ENCODE measurements at regions of chr22 and their contacts with region 1.

Region 1: DNA sequence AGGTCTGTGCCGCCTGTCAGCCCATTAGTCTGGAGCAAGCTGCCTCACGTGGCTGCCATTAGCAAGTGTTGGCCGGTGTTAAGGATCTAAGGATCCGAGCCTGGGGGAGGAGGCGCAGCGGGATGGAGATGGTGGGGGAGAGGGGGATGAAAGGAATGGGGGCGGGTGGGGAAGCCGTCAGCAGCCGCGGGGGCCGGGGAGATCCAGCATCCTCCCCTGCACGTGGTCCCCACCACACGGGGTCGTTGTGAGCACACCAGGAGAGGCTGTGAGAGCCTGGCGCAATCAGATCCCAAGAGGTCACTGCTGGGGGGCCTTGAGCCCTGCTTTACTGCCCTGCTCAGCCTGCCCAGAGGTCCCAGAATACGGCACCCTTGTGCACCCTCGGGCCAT is 7.3 kb downstream of the CABP7 start:
- DNase-seq: peak; percentile 33
- ATAC-seq: peak; percentile 69
- H3K4me3 ChIP-seq: no peak overlapping the region; a peak in 1 of 6 replicates
- H3K27ac ChIP-seq: no peak overlapping the region
- H3K4me1 ChIP-seq: peaks cover 16% of the 10 kb centered on the region; the same call in 1 of the 2 replicates
- H3K27me3 ChIP-seq: peaks cover 13 to 41% of the 10 kb centered on the region in 2 experiments; a peak in 4 of 5 replicates
- CTCF ChIP-seq: peak; percentile 79
- EP300 ChIP-seq: no peak
- POLR2A ChIP-seq: no peak
- RAD21 ChIP-seq: no peak

Region 2: DNA sequence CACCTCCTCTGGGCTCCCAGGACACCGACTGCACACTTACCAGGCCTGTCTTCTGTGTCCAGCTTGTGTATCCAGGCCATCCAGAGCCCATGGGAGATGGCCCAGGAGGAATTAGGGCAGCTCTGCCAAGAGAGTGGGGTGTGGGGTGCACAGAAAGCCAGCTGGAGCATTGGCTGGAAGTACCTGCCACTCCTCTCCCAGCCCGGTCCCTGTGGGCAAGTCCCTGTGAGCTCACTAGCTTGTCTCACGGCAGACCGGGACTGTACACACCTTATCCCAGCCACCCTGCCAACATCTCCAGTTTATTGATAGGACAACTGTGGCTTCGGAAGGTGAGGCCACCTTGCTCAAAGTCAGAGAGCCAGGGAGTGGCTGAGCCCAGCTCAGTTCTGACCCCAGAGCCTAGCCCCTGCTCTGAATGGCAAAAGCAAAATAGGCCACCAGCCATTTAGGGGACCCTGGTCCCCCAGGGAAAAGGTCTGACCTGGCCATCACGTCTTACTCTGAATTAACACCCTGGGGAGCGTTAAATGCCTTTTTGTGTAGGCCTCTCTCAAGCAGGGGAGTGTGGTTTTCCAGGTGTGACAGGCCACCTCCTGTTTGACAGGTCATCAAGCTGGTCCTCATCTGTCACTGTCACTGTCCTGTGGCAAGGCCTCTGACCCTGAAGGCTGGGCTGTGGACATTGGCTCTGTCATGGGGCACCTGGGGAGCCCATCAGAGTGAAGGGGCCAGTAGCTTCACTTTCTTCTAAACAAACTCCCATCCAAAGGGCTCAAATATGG is 55.1 kb after region 1 on chr22:
- CTCF ChIA-PET with region 1: no interaction called
- POLR2A ChIA-PET with region 1: no interaction called
- in situ Hi-C with region 1: no loop called
- intact Hi-C with region 1: no loop called
- DNase-seq: peak; percentile 50
- ATAC-seq: peak; percentile 56
- H3K4me3 ChIP-seq: peak overlapping the region in 2 of 3 experiments; percentile 8 to 45; a peak in 1 of 6 replicates
- H3K27ac ChIP-seq: peak overlapping the region; percentile 5
- H3K4me1 ChIP-seq: peaks cover 95% of the 10 kb centered on the region
- H3K27me3 ChIP-seq: no peaks in the 10 kb centered on the region
- CTCF ChIP-seq: no peak
- EP300 ChIP-seq: no peak
- POLR2A ChIP-seq: no peak
- RAD21 ChIP-seq: no peak

Region 3: GRCh38 chr22:30005213-30005857 is 278.2 kb after region 1 on chr22:
- CTCF ChIA-PET with region 1: interaction called, 3 read pairs
- POLR2A ChIA-PET with region 1: no interaction called
- in situ Hi-C with region 1: no loop called
- intact Hi-C with region 1: loop called (anchors 1 kb)
- DNase-seq: peak; percentile 66
- ATAC-seq: peak; percentile 82
- H3K4me3 ChIP-seq: no peak overlapping the region
- H3K27ac ChIP-seq: no peak overlapping the region
- H3K4me1 ChIP-seq: no peaks in the 10 kb centered on the region
- H3K27me3 ChIP-seq: no peaks in the 10 kb centered on the region
- CTCF ChIP-seq: peak; percentile 90
- EP300 ChIP-seq: no peak
- POLR2A ChIP-seq: no peak
- RAD21 ChIP-seq: peak; percentile 84

Measured in HepG2 (cell line).